ENCODE measurements at regions of chr19 and their contacts with region 1.

Region 1: GRCh38 chr19:10027158-10027693 is 13.9 kb downstream of the RDH8 start:
- DNase-seq: no peak
- H3K4me3 ChIP-seq: no peak overlapping the region
- H3K27ac ChIP-seq: no peak overlapping the region
- H3K4me1 ChIP-seq: no peaks in the 10 kb centered on the region
- H3K27me3 ChIP-seq: no peaks in the 10 kb centered on the region
- CTCF ChIP-seq: no peak
- POLR2A ChIP-seq: no peak

Region 2: DNA sequence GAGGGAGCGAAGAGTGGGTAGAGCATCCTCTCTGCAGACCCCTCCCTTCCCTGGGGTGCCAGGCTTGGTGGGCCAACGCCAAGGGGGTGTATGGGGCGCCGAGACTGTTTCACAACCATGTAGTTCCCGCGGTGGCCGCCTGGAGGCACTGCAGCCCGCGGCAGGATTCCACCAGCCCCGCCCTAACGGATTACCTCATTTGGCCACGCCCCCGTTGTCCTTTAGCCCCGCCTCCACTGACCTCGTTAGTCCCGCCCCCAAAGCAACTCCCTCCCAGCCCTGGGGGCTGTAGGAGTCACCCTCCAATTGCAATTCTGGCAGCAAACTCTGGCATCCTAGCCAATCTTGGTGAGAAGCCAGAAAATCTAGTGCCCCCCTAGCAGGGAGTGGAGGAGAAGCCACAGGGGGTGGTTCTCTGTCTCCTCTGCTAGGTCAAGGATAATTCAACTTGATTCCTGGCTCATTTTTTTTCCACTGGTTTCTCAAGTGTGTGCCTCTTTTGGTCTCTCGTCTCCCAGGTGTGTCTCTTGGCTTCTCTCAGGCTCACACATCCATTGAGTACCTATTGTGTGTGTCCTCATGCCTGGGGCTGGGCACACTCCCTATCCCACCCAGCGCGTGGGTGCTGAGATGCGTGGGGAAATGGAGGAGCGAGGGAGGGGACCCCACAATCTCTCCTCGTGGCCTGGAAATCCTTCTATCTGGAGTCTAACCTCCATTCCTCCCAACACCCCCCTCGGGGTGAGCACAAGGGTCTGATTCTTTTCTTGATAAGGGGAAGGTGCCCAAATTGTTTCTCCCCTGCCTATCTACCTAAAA is 92.9 kb before region 1 on chr19:
- intact Hi-C with region 1: loop called (anchors 5 kb)
- DNase-seq: peak; percentile 87 to 89
- H3K4me3 ChIP-seq: no peak overlapping the region
- H3K27ac ChIP-seq: peak overlapping the region; percentile 21 to 42
- H3K4me1 ChIP-seq: peaks cover 3 to 22% of the 10 kb centered on the region in 2 donors
- H3K27me3 ChIP-seq: no peaks in the 10 kb centered on the region
- CTCF ChIP-seq: peak; percentile 88 to 93 (median 90)
- POLR2A ChIP-seq: peak in 1 of 2 donors; percentile 18

Region 3: GRCh38 chr19:10120538-10121189 is 93.4 kb after region 1 on chr19:
- intact Hi-C with region 1: no loop called
- DNase-seq: peak in 1 of 2 donors; percentile 28
- H3K4me3 ChIP-seq: peak overlapping the region in 1 of 2 donors; percentile 25
- H3K27ac ChIP-seq: peak overlapping the region; percentile 63 to 78
- H3K4me1 ChIP-seq: peaks cover 0 to 7% of the 10 kb centered on the region in 2 donors
- H3K27me3 ChIP-seq: no peaks in the 10 kb centered on the region
- CTCF ChIP-seq: no peak
- POLR2A ChIP-seq: no peak

Measured in uterus (tissue), 4 donors.